Spleen (tissue), 13 donors: ENCODE measurements at regions of chr1 and their contacts with region 1.

Region 1: DNA sequence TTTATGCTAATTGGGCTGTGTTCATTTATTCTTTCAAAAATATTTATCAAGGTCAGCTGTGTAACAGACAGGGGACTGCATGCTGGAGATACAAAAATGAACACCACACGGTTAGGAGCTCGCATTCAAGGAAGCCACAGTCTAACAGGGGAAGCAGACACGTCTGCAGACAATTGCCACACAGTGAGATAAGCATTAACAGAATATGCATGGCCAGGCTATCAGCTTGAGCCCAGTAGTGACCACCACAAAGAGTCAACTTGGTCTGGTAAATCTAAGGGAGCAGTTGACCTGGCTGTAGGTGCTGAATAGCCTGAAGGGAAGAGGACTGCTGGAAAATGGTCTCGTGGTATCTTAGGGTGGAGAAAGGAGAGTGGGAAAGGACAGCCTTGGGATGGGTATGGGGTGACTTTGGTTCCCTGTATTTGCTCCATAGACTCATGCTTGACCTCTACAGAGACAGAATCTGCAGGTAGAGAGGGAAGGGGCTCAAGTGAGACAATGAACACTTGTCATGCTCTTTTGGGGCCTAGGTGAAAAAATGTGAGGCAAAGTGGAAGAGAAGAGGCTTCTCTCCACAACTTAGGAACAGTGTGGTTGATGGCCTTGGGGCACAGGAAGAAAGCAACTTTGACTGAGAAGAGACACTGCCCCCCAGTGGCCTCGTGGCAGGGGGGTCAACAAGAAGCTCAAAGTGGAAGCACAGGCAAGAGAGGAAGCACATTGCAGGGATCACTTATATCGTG is 7.6 kb upstream of the NPL start:
- DNase-seq: peak; percentile 86
- H3K4me3 ChIP-seq: no peak overlapping the region
- H3K27ac ChIP-seq: peak overlapping the region in 6 of 8 donors; percentile 20 to 63 (median 42)
- H3K4me1 ChIP-seq: peaks cover 10 to 34% (median 11%) of the 10 kb centered on the region in 6 donors
- H3K27me3 ChIP-seq: no peaks in the 10 kb centered on the region
- CTCF ChIP-seq: peak; percentile 54 to 83 (median 72)
- POLR2A ChIP-seq: no peak

Region 2: DNA sequence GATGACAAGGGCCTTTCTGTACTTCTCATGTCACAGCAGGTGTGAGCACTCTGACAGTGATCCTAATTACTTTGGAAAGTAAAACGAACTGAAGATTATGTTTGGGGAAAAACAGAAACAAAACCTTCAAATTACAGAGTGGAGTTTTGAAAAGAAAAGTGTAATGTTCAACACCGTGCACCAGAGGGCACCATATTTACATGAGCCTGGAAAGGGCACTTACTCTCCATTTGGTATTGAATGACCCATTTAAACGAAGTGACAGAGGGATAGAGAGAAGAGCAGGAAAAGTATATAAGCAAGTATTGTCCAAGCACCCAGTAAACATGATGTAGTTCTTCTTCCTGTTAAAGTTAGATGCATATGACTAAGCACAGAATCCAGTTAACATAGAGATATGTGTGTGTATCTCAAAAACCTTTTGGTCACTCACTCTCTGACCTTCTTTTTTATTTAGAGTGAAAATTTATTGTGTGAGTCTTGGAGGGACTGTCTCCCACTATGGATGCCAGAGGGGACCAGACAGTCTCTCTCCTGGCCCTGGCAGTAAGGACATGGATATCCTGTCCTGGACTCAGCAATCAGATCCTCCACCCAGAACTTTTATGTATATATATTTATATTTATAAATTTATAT is 335.9 kb before region 1 on chr1:
- intact Hi-C with region 1: loop called (anchors 5 kb)
- DNase-seq: no peak
- H3K4me3 ChIP-seq: no peak overlapping the region
- H3K27ac ChIP-seq: no peak overlapping the region
- H3K4me1 ChIP-seq: peaks cover 0 to 6% (median 2%) of the 10 kb centered on the region in 6 donors
- H3K27me3 ChIP-seq: no peaks in the 10 kb centered on the region
- CTCF ChIP-seq: peak; percentile 29 to 72 (median 54)
- POLR2A ChIP-seq: no peak

Region 3: DNA sequence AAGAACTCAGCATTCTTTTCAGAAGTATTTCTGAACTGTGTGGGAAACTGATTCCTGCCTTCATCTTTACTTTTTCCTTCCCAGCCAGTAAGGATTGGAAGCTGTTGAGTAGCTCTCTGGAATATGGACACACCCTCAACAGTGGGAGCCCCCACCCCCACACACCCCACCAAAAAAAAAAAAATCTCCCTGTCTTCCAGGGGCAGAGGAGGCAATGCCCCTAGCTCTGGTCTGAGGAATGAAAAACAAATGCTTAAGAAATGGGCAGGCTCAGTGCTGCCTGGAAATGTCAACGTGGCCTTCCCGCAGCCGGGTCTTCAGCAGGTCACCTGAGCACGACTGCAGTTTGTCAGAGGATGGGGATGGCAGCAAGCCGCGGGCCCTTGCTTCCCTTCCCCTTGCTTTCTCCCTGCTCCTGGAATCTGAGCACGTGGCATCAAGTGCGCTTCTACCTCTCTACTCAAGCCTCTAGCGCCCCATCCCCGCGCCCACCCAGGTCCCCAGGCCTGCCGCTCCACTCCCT is 178.3 kb before region 1 on chr1:
- intact Hi-C with region 1: loop called (anchors 2 kb)
- DNase-seq: no peak
- H3K4me3 ChIP-seq: peak overlapping the region; percentile 45 to 79 (median 56)
- H3K27ac ChIP-seq: peak overlapping the region in 7 of 8 donors; percentile 60 to 81 (median 76)
- H3K4me1 ChIP-seq: peaks cover 4 to 81% (median 43%) of the 10 kb centered on the region in 6 donors
- H3K27me3 ChIP-seq: peaks cover 0 to 14% (median 0%) of the 10 kb centered on the region in 7 donors
- CTCF ChIP-seq: no peak
- POLR2A ChIP-seq: no peak